Sigmoid colon (tissue), 7 donors: ENCODE measurements at regions of chr1 and their contacts with region 1.

Region 1: DNA sequence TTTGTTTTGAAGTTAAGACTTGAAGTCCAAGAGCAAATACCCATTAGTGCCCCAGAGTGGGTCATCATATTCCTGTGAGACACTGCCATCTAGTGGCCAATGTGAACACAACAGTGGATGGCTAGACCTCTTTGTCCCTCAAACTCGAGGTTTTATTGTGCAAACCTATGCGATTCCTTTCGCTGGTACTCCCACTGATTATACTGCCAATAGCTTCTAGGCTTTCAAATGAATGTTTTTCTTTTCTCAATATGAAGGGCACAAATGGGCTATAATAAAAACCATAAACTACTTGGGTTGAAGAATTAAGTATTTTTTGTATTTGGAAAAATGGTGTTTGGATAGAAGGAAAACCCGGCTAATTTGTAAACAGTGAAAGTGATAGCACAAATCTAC is 100.4 kb upstream of the ZNF281 start:
- DNase-seq: peak; percentile 76
- H3K4me3 ChIP-seq: no peak overlapping the region
- H3K27ac ChIP-seq: no peak overlapping the region
- H3K4me1 ChIP-seq: peaks cover 0 to 6% (median 0%) of the 10 kb centered on the region in 4 donors
- H3K27me3 ChIP-seq: peaks cover 0 to 8% (median 0%) of the 10 kb centered on the region in 3 donors
- CTCF ChIP-seq: peak; percentile 68 to 90 (median 82)
- EP300 ChIP-seq: no peak
- POLR2A ChIP-seq: no peak

Region 2: DNA sequence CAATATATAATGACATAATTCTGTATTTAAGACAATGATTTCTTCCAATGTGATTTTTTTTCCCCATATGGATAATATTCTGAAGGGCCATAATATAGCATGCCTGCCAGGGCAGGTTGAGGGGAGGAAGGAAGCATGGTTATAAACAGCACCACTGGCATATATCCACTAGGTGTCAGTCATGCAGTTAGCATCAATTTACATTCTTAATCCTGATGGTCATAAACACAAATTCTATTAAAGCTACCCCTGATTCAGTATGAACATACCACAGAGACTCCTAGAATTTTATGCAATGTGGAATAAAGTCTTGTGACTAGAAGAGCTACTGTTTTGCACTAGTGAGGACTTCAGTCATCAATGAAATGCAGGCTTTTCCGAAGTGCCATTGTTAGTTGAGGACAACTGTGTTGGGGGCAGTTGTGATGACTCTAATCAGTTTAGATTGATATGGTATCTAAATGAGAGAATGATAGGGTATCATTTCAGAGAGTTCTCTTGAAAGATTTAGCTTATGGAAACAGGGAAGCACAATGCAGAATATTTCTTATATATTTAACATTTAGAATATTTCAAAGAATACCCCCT is 825.4 kb before region 1 on chr1:
- intact Hi-C with region 1: loop called (anchors 10 kb)
- DNase-seq: no peak
- H3K4me3 ChIP-seq: no peak overlapping the region
- H3K27ac ChIP-seq: no peak overlapping the region
- H3K4me1 ChIP-seq: no peaks in the 10 kb centered on the region
- H3K27me3 ChIP-seq: no peaks in the 10 kb centered on the region
- CTCF ChIP-seq: peak; percentile 6 to 50 (median 33)
- EP300 ChIP-seq: no peak
- POLR2A ChIP-seq: no peak

Region 3: GRCh38 chr1:200708769-200709168 is 198.5 kb after region 1 on chr1:
- intact Hi-C with region 1: no loop called
- DNase-seq: no peak
- H3K4me3 ChIP-seq: no peak overlapping the region
- H3K27ac ChIP-seq: no peak overlapping the region
- H3K4me1 ChIP-seq: no peaks in the 10 kb centered on the region
- H3K27me3 ChIP-seq: no peaks in the 10 kb centered on the region
- CTCF ChIP-seq: no peak
- EP300 ChIP-seq: no peak
- POLR2A ChIP-seq: no peak